AG04449 (cell line): ENCODE measurements at regions of chr17 and their contacts with region 1.

Region 1: GRCh38 chr17:8409966-8410864 is 12.6 kb upstream of the RNF222 start:
- DNase-seq: peak; percentile 23
- H3K4me3 ChIP-seq: no peak overlapping the region; the same call in 1 of the 2 replicates
- CTCF ChIP-seq: peak; percentile 85

Region 2: GRCh38 chr17:8393420-8394241 is 16.6 kb before region 1 on chr17:
- CTCF ChIA-PET with region 1: interaction called, 14 read pairs
- POLR2A ChIA-PET with region 1: no interaction called
- DNase-seq: no peak
- H3K4me3 ChIP-seq: no peak overlapping the region
- CTCF ChIP-seq: no peak

Region 3: DNA sequence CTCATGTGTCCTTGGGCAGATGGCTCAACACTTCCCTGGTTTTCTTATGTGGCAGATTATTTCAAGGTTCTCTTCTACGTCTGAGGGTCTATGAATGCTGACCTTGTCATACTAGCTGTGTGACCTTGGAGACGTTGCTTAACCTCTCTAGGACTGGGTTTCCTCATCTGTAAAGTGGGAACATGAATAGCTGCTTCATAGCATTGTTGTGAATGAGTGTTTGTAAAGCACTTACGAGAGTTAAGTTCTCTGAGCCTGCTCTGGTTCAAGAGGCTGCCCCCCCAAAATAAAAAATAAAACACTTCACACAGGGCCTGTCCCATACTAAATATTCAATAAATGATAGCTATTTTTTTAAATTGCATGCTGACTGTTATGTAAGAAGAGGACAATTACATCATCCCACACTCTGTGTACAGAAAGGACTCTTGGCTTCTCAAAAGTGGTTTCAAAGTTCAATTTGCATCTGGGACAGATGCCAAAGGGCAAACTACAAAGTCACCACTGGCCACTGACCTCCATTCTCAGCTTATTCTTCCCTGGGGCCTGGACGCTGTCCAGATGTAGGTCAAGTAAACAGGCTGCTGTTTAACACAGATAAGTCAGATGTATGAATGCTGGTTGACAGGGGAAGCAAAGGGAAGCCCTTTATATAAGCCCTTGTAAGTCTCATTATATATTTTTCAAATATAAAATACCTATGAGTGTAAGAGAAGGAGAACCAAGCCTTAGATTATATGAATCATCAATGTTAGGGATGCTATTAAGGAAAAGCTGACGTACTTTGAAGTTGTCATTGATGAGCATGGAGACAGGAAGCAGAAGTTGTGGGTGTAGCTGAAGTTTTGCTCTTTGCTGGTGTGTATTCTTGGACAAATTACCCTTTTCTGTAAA is 10.1 kb after region 1 on chr17:
- CTCF ChIA-PET with region 1: interaction called, 46 read pairs
- POLR2A ChIA-PET with region 1: no interaction called
- DNase-seq: no peak
- H3K4me3 ChIP-seq: no peak overlapping the region
- CTCF ChIP-seq: no peak

Region 4: GRCh38 chr17:8426094-8426720 is 16.0 kb after region 1 on chr17:
- CTCF ChIA-PET with region 1: interaction called, 46 read pairs
- POLR2A ChIA-PET with region 1: interaction called, 3 read pairs
- DNase-seq: no peak
- H3K4me3 ChIP-seq: no peak overlapping the region
- CTCF ChIP-seq: no peak

Region 5: DNA sequence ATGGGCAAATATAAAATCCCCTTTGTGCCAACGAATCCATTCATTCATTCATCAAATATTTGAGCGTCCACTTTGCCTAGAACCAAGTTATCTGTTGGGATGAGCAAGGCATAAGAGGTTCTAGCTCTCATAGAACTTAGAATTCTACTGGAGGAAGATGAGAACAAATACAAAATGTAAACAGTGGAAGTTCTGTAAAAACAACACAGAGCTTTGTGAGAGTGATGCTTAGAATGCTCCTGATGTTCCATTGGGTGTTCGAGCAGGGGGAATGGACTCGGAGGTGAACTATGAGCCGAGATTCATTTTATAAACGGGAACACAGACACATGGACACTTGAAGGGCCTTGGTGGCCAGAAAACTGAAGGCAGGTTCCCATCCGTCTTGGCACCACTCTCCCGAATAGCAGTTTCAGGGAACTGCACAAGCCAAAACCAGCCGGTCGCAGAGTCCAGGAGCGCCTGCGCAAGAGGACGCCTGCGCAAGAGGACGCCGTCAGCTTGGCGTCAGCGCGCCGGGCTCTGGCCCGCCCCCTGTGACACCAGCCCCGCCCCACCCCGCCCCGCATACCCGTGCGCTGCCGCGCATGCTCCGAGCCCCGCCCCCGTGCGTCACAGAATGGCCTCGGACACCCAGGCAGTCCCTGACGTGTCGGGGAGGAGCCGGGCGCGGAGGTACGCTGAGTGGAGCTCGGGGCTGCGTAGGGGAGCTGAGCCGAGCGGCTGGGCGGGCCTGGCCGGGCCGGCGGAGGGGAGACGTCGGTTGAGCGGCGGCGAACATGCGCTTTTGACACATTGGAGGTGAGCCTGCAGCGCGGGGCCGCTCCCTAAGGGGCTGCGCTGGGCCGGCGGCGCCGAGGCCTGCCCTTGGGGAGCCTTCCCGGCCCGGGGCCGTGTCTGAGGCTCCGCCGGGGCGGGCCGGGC is 25.3 kb after region 1 on chr17 and contains the start of gene NDEL1:
- CTCF ChIA-PET with region 1: interaction called, 16 read pairs
- POLR2A ChIA-PET with region 1: interaction called, 5 read pairs
- DNase-seq: peak; percentile 77
- H3K4me3 ChIP-seq: peak within 1 kb of the TSS; percentile 93
- CTCF ChIP-seq: no peak

Region 6: GRCh38 chr17:8745586-8746500 is 335.6 kb after region 1 on chr17:
- CTCF ChIA-PET with region 1: interaction called, 50 read pairs
- POLR2A ChIA-PET with region 1: no interaction called
- DNase-seq: no peak
- H3K4me3 ChIP-seq: peak overlapping the region; percentile 61
- CTCF ChIP-seq: peak; percentile 82

Region 7: DNA sequence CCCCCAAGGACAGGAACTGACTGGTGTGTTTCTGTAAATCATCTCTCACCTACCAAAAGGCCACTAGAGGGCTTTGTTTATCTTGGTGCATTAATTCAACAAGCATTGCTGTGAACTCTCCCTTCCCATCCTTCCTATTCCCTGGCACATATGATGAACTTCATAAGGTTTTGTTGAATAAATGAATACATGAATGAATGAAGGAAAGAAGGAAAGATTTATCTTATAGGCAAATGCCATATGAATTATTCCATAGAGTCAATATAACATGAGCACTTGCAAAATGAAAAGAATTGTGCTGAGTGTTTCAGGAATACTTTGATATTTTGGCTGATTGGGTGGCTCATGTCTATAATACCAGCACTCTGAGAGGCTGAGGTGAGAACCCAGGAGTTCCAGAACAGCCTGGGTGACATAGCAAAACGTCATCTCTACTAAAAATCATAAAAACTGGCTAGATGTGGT is 343.8 kb after region 1 on chr17:
- CTCF ChIA-PET with region 1: interaction called, 50 read pairs
- POLR2A ChIA-PET with region 1: no interaction called
- DNase-seq: no peak
- H3K4me3 ChIP-seq: no peak overlapping the region
- CTCF ChIP-seq: peak; percentile 24